Activated CD4-positive, alpha-beta memory T cell treated with anti-CD3 and anti-CD28 coated beads, Interleukin-2, amount 10 ng/mL, durations not matched to agents 7 days and 5 days (primary cell): ENCODE measurements at regions of chr6 and their contacts with region 1.

Region 1: GRCh38 chr6:45714741-45715507 is 300.7 kb downstream of the CLIC5 start:
- DNase-seq: peak; percentile 64
- H3K4me3 Mint-ChIP-seq: peak overlapping the region; percentile 23
- H3K27ac Mint-ChIP-seq: peak overlapping the region; percentile 75
- H3K4me1 Mint-ChIP-seq: peaks cover 41% of the 10 kb centered on the region
- H3K27me3 Mint-ChIP-seq: no peaks in the 10 kb centered on the region

Region 2: DNA sequence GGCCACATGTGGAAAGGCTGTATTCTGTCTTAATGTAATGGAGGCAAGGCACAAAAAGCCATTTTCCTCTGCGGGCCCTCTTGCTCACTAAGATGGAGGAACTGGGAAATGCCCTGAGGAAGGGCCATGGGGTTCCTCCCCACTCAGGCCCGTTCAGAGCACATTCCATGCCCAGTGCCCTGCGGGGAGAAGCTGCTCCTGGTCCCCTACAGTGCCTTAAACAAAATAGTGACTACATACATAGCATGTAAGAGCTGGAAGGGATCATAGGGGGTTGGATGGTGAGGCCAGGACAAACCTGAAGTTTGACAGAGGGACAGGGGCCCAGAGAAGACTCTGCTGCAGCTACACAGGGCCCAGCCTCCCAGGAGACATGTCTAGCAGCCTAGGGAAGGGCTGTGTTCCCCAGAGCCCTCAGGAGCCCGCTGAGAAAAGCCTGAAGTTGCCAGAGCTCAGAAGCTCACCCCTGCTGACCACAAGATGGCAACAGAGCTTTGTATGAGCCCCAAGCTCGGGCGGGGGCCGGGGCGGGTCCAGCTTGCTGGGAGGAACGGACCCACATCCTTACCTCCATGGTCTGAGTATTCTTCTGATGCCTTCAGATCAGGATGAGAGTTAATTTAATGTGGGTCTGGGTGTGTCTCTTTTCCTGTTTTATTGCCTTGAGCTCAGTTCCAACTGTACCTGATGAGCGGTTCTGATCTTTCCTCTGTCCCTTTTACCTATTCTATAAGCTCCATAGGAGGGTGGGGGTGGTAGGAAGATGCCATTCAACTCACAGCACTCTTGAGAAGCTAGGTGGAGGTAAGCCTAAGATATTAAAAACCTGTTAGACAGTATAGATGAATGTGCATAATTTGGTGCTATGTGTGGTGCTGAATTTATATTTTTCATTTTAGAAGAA is 1084.5 kb before region 1 on chr6:
- CTCF ChIA-PET with region 1: interaction called, 19 read pairs
- POLR2A ChIA-PET with region 1: interaction called, 3 read pairs
- DNase-seq: peak; percentile 60
- H3K4me3 Mint-ChIP-seq: no peak overlapping the region
- H3K27ac Mint-ChIP-seq: no peak overlapping the region
- H3K4me1 Mint-ChIP-seq: peaks cover 24% of the 10 kb centered on the region
- H3K27me3 Mint-ChIP-seq: peaks cover 3% of the 10 kb centered on the region

Region 3: GRCh38 chr6:45350186-45350710 is 364.7 kb before region 1 on chr6:
- CTCF ChIA-PET with region 1: no interaction called
- POLR2A ChIA-PET with region 1: no interaction called
- DNase-seq: no peak
- H3K4me3 Mint-ChIP-seq: no peak overlapping the region
- H3K27ac Mint-ChIP-seq: no peak overlapping the region
- H3K4me1 Mint-ChIP-seq: peaks cover 4% of the 10 kb centered on the region
- H3K27me3 Mint-ChIP-seq: no peaks in the 10 kb centered on the region

Region 4: DNA sequence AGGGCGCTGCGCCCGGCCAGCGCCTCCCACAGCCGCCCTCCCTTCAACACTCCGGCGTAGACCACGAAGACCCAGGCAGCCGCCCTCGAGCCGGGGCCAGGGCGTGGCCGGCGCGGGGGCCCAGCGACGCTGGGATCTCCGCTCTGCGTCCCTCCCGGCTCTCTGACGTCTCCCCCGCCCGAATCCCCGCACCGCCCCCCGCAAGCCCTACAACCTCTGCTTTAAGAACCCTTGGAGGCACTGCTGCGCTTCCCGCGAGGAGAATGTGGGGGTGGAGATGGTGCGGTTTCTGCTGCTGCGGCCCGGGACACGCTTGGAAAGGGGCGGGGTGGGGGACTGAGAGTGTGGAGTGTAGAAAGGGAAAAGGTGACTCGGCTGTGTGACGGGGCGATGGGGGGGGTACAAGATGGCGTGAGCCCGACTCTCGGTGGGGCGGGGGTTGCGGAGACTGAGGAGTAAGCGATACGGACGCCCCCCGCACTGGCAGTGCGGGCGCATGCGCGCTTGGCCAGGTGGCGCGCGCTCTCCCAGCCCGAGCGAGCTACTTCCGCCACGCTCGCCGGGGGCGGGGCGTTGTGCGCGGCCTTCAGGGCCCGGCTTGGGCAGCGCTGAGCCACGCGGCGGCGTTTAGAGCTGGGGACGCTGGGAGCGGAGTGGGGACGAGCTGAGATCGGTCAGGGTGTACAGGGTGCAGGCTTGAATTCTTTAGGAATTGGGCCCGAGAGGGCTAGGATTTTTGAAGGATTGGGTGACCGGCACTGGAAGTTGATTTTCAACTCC is 337.2 kb before region 1 on chr6 and contains the start of gene SUPT3H:
- CTCF ChIA-PET with region 1: interaction called, 24 read pairs
- POLR2A ChIA-PET with region 1: interaction called, 16 read pairs
- DNase-seq: peak; percentile 90
- H3K4me3 Mint-ChIP-seq: peak within 1 kb of the TSS; percentile 92
- H3K27ac Mint-ChIP-seq: peak within 1 kb of the TSS; percentile 95
- H3K4me1 Mint-ChIP-seq: peaks cover 27% of the 10 kb centered on the region
- H3K27me3 Mint-ChIP-seq: no peaks in the 10 kb centered on the region
- total RNA-seq, gene SUPT3H: 7.4 to 9.7 TPM

Region 5: GRCh38 chr6:45441851-45442458 is 273.0 kb before region 1 on chr6:
- CTCF ChIA-PET with region 1: interaction called, 15 read pairs
- POLR2A ChIA-PET with region 1: interaction called, 8 read pairs
- DNase-seq: no peak
- H3K4me3 Mint-ChIP-seq: no peak overlapping the region
- H3K27ac Mint-ChIP-seq: peak overlapping the region; percentile 50
- H3K4me1 Mint-ChIP-seq: peaks cover 95% of the 10 kb centered on the region
- H3K27me3 Mint-ChIP-seq: no peaks in the 10 kb centered on the region

Region 6: GRCh38 chr6:45737331-45738056 is 22.6 kb after region 1 on chr6:
- CTCF ChIA-PET with region 1: interaction called, 11 read pairs
- POLR2A ChIA-PET with region 1: interaction called, 4 read pairs
- DNase-seq: no peak
- H3K4me3 Mint-ChIP-seq: peak overlapping the region; percentile 62
- H3K27ac Mint-ChIP-seq: peak overlapping the region; percentile 86
- H3K4me1 Mint-ChIP-seq: peaks cover 55% of the 10 kb centered on the region
- H3K27me3 Mint-ChIP-seq: peaks cover 2% of the 10 kb centered on the region

Region 7: GRCh38 chr6:45772886-45773495 is 58.1 kb after region 1 on chr6:
- CTCF ChIA-PET with region 1: no interaction called
- POLR2A ChIA-PET with region 1: no interaction called
- DNase-seq: no peak
- H3K4me3 Mint-ChIP-seq: no peak overlapping the region
- H3K27ac Mint-ChIP-seq: no peak overlapping the region
- H3K4me1 Mint-ChIP-seq: no peaks in the 10 kb centered on the region
- H3K27me3 Mint-ChIP-seq: no peaks in the 10 kb centered on the region

Region 8: DNA sequence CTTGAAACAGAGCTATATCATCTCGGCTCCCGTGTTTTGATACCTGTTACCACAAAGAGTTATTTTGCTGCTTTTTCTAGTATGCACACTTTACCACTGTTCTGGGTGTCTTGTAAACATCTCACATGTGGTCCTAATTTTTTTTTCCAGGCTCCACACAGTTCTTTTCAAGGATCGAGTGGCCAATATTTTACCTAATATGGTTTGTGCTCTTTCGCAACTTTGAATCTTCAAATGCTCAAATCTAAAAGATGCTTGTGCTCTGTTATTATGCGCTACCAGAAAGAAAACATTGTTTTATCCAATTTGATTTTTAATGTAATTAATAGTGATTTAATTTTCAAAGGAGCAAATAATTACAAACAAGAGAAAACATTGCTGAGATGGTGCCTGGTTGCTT is 445.2 kb after region 1 on chr6:
- CTCF ChIA-PET with region 1: no interaction called
- POLR2A ChIA-PET with region 1: no interaction called
- DNase-seq: no peak
- H3K4me3 Mint-ChIP-seq: no peak overlapping the region
- H3K27ac Mint-ChIP-seq: no peak overlapping the region
- H3K4me1 Mint-ChIP-seq: no peaks in the 10 kb centered on the region
- H3K27me3 Mint-ChIP-seq: peaks cover 28% of the 10 kb centered on the region